ENCODE measurements at regions of chr14 and their contacts with region 1.

Region 1: DNA sequence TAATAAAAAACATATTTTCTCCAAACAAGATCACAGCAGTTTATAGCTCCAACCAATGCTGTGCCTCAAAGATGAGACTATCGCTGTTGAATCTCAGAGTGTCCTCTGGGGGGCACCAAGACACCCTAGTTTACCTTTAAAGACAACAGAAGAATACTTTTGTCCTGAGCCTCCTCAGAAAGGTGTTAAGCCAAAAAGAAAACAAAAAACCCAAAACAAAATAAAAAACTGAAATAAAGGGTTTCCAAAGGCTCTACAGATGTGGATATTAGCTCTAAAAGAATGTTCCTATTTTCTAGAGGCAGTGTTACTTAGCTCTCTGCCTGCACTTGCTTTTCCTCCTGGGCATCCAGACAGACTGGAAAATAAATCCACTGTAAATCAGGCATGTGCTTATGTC is 86.9 kb upstream of the TTC7B start:
- DNase-seq: peak; percentile 74
- H3K4me3 Mint-ChIP-seq: no peak overlapping the region
- H3K27ac Mint-ChIP-seq: no peak overlapping the region
- H3K4me1 Mint-ChIP-seq: peaks cover 24% of the 10 kb centered on the region
- H3K27me3 Mint-ChIP-seq: no peaks in the 10 kb centered on the region

Region 2: DNA sequence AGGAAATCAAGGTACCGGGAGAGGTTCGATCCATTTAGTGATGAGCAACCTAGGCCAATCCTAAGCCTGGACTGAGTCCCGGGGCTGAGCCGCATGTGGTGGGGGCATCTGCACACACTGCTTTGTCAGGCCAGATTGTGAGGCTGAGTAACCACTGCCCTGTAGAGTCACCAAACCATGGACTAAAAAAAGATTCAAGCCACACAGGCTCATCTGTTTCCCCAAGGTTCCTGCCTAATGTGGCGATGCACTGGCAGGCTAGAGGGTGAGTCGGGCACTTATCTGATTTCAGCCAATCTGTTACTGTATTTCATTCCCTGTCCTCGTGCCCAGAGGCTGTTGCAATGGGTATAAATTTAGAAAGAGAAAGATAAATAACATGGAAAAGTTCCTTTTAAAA is 227.7 kb before region 1 on chr14:
- CTCF ChIA-PET with region 1: no interaction called
- DNase-seq: no peak
- H3K4me3 Mint-ChIP-seq: no peak overlapping the region
- H3K27ac Mint-ChIP-seq: no peak overlapping the region
- H3K4me1 Mint-ChIP-seq: peaks cover 32% of the 10 kb centered on the region
- H3K27me3 Mint-ChIP-seq: no peaks in the 10 kb centered on the region

Region 3: DNA sequence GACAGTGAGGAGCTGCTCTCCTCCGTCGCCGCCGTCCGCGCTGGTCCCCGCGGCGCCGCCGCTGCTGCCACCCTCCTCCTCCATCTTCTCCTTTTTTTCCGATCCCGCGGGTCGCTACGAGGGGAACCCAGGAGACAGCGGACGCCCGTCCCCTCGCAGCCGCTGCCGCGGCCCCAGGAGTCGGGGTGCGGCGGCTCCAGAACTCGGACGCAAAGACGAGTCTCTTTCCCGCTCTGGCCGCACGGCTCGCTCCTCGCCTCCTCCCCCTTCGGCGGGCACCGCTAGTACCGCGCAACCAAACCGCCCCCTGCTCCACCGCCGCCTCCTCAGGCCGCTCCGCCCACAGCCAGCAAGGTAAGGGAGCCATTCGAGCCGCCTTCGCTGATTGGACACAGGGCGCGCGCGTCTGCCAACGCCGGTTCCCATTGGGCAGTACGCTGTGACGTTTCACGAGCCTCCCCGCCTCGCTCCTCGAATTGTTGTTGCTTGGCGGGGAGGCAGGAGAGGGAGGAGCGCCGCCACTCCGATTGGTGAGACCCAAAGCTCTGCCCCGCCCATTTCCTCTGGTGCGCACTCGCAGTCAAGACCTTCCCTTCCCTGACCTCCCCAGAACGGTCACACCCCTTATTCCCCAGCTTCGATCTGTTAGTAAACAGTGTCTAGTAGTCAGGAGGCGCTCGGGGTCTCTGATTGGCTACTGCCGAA is 157.4 kb after region 1 on chr14 and contains the start of gene RPS6KA5:
- CTCF ChIA-PET with region 1: interaction called, 26 read pairs
- DNase-seq: peak; percentile 100
- H3K4me3 Mint-ChIP-seq: peak within 1 kb of the TSS; percentile 85
- H3K27ac Mint-ChIP-seq: peak within 1 kb of the TSS; percentile 81
- H3K4me1 Mint-ChIP-seq: peaks cover 63% of the 10 kb centered on the region
- H3K27me3 Mint-ChIP-seq: no peaks in the 10 kb centered on the region

Region 4: GRCh38 chr14:91114079-91115065 is 211.3 kb after region 1 on chr14:
- CTCF ChIA-PET with region 1: interaction called, 31 read pairs
- DNase-seq: peak; percentile 82
- H3K4me3 Mint-ChIP-seq: peak overlapping the region; percentile 83
- H3K27ac Mint-ChIP-seq: peak overlapping the region; percentile 93
- H3K4me1 Mint-ChIP-seq: peaks cover 75% of the 10 kb centered on the region
- H3K27me3 Mint-ChIP-seq: no peaks in the 10 kb centered on the region

Region 5: GRCh38 chr14:91138511-91139359 is 235.6 kb after region 1 on chr14:
- CTCF ChIA-PET with region 1: interaction called, 14 read pairs
- DNase-seq: peak; percentile 67
- H3K4me3 Mint-ChIP-seq: no peak overlapping the region
- H3K27ac Mint-ChIP-seq: peak overlapping the region; percentile 53
- H3K4me1 Mint-ChIP-seq: peaks cover 59% of the 10 kb centered on the region
- H3K27me3 Mint-ChIP-seq: no peaks in the 10 kb centered on the region

Region 6: DNA sequence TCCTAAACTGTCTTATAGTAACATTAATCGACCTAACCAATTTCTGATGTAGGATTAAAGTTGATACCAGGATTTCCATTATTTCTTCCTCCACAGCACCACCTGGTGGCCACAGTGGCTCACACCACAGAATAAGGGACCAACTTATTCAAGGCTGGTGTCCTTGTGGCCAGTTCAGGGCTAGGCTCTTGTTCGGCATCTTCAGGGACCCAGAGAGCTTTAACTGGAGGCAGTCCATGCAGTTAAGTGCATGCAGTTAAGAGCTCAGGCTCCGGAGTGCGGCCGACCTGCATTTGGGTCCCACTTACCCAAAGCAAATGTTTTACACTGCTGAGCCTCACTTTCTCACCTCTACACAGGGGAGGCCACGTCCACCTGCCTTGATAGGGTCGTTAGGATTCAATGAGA is 383.4 kb after region 1 on chr14:
- CTCF ChIA-PET with region 1: interaction called, 19 read pairs
- DNase-seq: peak; percentile 86
- H3K4me3 Mint-ChIP-seq: no peak overlapping the region
- H3K27ac Mint-ChIP-seq: peak overlapping the region; percentile 4
- H3K4me1 Mint-ChIP-seq: peaks cover 19% of the 10 kb centered on the region
- H3K27me3 Mint-ChIP-seq: no peaks in the 10 kb centered on the region